ENCODE measurements at regions of chr4 and their contacts with region 1.

Region 1: GRCh38 chr4:185997296-185997695 is 71.7 kb upstream of the TLR3 start:
- DNase-seq: peak; percentile 27 to 65
- ATAC-seq: peak in 7 of 8 donors; percentile 73 to 87 (median 84)
- H3K4me3 ChIP-seq: no peak overlapping the region
- H3K27ac ChIP-seq: no peak overlapping the region
- H3K4me1 ChIP-seq: peaks cover 0 to 12% (median 0%) of the 10 kb centered on the region in 9 donors
- H3K27me3 ChIP-seq: no peaks in the 10 kb centered on the region
- CTCF ChIP-seq: no peak

Region 2: GRCh38 chr4:185672618-185673017 is 324.7 kb before region 1 on chr4:
- intact Hi-C with region 1: no loop called
- DNase-seq: no peak
- ATAC-seq: peak in 3 of 8 donors; percentile 29 to 36 (median 33)
- H3K4me3 ChIP-seq: no peak overlapping the region
- H3K27ac ChIP-seq: peak overlapping the region in 7 of 10 donors; percentile 2 to 60 (median 45)
- H3K4me1 ChIP-seq: peaks cover 0 to 71% (median 27%) of the 10 kb centered on the region in 9 donors
- H3K27me3 ChIP-seq: no peaks in the 10 kb centered on the region
- CTCF ChIP-seq: no peak

Region 3: DNA sequence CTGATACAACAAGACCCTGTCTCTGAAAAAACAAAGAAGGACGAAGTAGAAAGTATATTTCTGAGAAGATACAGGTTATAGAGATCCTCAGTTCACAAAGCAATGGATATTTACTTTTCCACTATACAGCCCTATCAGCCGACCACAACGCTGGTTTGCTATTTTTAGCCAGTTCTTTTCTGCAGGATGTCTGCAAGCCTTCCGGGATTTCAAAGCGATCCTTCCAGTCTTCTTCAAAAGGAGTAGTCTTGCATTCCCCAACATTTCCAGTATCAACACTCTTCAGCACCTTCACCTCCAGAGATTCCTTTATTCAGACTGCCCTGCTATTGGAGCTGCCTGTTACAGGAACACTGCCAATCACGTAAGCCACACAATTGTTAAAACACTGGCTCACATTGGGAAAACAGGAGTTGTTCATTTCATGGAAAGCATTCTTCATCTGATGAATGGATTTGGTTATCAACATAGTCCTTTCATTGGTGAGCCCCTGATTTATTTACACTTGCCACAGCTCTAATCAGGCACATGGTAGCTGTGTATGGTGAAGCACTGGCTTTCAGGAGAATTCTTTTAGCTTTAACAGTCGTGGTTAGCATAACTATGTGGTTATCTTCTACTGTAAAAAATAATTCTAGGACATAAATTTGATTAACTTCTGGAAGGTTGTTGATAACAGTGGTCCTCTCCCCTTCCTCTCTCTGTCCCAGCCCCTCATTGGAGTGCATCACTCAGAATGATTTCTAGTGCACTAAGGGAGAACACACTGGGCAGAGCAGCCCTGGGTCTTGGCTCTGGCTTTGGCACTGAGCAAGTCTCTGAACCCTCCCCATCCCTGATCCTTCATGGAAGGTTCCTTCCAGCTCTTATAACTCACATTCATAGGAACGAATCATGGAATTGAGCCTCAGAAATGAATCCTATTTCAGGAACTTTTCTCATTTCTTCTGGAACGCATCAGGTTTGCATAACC is 75.4 kb before region 1 on chr4:
- intact Hi-C with region 1: loop called in 1 of 10 experiments (anchors 10 kb)
- DNase-seq: no peak
- ATAC-seq: peak in 7 of 8 donors; percentile 18 to 60 (median 48)
- H3K4me3 ChIP-seq: peak overlapping the region in 8 of 10 donors; percentile 1 to 48 (median 32)
- H3K27ac ChIP-seq: peak overlapping the region in 6 of 10 donors; percentile 5 to 46 (median 28)
- H3K4me1 ChIP-seq: peaks cover 3 to 26% (median 13%) of the 10 kb centered on the region in 9 donors
- H3K27me3 ChIP-seq: no peaks in the 10 kb centered on the region
- CTCF ChIP-seq: no peak